AG04449 (cell line): ENCODE measurements at regions of chr6 and their contacts with region 1.

Region 1: GRCh38 chr6:136289579-136290409 is at the start of gene BCLAF1:
- DNase-seq: peak; percentile 96
- H3K4me3 ChIP-seq: peak within 1 kb of the TSS; percentile 75
- CTCF ChIP-seq: no peak

Region 2: GRCh38 chr6:136249811-136250685 is 39.7 kb before region 1 on chr6 and contains the start of gene MTFR2:
- CTCF ChIA-PET with region 1: no interaction called
- POLR2A ChIA-PET with region 1: interaction called, 11 read pairs
- DNase-seq: peak; percentile 95
- H3K4me3 ChIP-seq: peak within 1 kb of the TSS; percentile 96
- CTCF ChIP-seq: no peak

Region 3: DNA sequence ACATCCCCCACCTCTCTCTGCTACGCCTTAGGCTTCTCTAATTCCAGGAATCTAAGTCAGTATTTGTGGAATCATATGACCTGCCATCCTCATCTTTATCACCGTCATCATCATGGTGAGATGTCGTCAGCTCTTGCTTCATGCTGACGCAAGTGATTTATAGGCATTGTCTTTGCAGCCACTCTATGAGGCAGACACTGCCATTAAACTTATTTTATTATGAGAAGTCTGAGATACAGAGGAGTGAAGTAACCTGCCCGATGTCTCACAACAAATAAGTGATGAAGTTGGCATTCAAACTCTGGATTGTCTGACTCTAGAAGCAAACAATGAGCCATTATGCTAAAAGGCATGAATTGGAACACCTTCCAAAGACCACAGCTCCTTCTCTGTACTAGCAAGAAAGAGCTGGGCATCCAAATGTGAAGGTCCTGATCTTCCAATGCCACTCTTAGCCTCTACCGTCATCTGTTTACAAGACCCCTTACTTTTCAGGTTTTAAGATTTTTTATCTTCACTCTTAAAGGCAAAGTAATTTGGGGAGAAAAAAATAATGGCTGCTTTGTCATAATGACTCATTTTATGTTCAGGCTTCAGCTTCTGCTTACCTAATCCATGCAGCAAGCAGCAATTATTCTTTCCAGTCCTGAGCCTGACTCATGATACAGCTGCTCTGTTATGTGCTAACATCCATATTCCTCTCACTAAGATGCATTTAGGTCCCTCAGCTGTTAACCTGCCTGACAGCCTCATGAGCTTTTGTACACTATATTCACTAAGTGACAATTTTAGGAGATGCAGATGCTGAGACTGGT is 113.6 kb after region 1 on chr6:
- CTCF ChIA-PET with region 1: no interaction called
- POLR2A ChIA-PET with region 1: no interaction called
- DNase-seq: peak; percentile 86
- H3K4me3 ChIP-seq: no peak overlapping the region; the same call in 1 of the 2 replicates
- CTCF ChIP-seq: no peak